ENCODE measurements at regions of chrX and their contacts with region 1.

Region 1: DNA sequence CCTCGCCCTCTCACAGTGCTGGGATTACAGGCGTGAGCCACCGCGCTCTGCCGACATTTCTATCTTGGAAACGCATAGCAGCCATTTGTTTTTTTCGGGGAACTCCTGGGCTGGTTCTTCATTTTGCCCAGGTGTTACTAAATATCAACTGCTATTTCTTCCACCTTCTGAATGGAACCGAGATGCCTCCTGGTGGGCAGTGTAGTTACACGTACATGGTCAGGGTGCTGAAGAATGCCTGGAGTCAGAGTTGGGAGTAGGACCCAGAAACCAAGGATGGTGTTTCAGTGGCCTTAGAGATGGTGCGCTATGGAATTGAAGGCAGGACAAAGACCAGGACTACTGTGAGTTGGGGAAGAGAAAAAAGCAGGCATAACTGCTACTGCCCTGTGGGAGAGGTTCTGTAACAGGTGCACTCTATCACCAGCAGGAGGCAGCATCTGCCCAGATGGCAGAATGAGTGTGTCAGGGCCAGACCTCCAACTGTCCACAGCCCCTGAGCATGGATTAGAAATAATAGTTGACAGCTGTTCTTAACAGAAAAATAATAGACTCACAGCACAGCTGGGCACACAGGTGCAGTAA is 81.7 kb downstream of the ZC4H2 start:
- DNase-seq: peak; percentile 60
- H3K4me3 ChIP-seq: no peak overlapping the region
- H3K27ac ChIP-seq: no peak overlapping the region
- H3K4me1 ChIP-seq: no peaks in the 10 kb centered on the region
- H3K27me3 ChIP-seq: no peaks in the 10 kb centered on the region
- CTCF ChIP-seq: peak; percentile 75

Region 2: DNA sequence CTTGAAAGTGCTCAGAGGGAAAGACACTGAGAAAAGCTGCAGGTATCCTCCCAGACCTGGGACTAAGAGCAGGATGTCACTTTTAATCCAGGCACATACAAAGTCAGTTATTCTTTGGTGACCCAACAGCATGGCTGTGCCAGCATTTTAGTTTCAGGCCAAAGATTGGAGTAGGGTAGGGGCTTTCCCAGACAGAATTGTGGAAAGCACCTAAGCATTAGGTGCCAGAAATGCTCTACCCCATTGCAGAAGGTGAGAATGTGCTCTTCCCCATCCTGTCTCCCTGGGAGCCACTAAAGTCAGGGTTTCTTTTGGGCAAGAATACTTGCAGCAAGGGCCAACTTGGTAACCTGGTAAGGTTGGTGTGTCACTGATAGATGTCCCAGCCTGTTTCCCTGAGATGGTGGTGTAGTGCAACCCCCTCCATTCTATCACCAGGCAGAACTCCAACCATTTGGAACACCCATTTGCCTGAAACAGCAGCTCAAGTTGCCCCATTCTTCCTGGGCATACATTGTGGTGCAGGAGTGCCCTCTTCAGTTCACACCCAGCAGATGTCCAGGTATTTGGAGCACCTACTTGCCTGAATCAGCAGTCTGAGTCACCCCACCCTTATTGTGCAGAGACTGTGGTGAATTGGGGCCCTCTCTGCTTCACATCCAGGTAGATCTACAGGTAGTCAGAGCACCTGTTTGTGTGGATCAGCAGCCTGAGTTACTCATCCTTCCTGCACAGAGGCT is 101.8 kb before region 1 on chrX:
- intact Hi-C with region 1: no loop called
- DNase-seq: no peak
- H3K4me3 ChIP-seq: no peak overlapping the region
- H3K27ac ChIP-seq: no peak overlapping the region
- H3K4me1 ChIP-seq: no peaks in the 10 kb centered on the region
- H3K27me3 ChIP-seq: no peaks in the 10 kb centered on the region
- CTCF ChIP-seq: no peak

Region 3: DNA sequence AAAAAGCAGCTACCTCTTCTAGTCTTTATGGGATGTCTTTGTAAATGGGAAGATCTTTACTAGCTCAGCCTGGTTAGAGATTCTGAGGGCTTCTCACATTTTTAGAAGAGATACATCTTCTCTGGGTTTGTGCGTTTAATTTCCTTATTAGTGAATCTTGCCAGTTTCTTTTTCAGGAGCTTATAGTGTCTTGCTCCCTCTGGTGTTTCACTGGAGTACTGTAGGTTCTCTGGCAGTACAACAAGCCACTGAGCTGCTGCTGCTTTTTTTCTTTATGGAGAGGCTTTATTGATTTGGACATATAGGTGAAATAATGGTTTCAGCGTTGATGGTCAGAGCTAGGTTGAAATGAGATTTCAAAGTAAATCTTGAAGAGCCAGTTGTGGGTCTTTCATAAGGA is 557.1 kb after region 1 on chrX:
- intact Hi-C with region 1: loop called (anchors 5 kb)
- DNase-seq: peak; percentile 26
- H3K4me3 ChIP-seq: no peak overlapping the region
- H3K27ac ChIP-seq: no peak overlapping the region
- H3K4me1 ChIP-seq: no peaks in the 10 kb centered on the region
- H3K27me3 ChIP-seq: no peaks in the 10 kb centered on the region
- CTCF ChIP-seq: peak; percentile 48

Region 4: DNA sequence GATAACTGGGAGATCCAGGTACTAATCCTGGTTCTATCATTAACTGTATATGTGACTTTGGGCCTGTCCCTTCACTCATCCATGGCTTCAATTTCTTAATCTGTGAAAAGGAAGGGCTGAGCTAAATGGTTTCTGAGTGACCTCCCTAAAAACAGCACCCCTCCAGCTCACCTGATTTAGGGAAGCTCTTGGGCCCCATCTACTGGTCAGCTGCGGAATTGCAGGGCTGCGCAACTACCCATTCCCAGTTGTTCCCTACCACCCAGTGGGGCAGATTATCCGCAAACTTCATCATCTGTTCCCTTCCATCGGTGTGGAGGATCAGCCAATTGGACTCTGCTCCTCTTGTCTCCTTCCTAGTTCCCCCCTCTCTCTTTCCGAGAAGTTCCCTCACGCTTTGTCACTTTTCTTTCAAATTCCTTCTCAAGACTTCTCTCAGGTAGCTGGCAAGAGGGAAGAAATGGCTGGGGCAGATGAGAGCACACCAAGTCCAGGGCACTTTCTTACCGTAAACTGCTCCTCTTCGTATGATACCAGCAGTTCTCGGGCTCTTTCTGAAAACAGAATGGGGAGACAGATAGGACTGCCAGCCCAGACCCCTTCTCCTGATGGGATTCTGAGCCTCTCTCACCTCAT is 634.3 kb after region 1 on chrX:
- intact Hi-C with region 1: loop called (anchors 10 kb)
- DNase-seq: peak; percentile 59
- H3K4me3 ChIP-seq: no peak overlapping the region
- H3K27ac ChIP-seq: no peak overlapping the region
- H3K4me1 ChIP-seq: no peaks in the 10 kb centered on the region
- H3K27me3 ChIP-seq: no peaks in the 10 kb centered on the region
- CTCF ChIP-seq: peak; percentile 99

Measured in colonic mucosa (tissue), 4 donors.